Gastrocnemius medialis (tissue), 4 donors: ENCODE measurements at regions of chr9 and their contacts with region 1.

Region 1: DNA sequence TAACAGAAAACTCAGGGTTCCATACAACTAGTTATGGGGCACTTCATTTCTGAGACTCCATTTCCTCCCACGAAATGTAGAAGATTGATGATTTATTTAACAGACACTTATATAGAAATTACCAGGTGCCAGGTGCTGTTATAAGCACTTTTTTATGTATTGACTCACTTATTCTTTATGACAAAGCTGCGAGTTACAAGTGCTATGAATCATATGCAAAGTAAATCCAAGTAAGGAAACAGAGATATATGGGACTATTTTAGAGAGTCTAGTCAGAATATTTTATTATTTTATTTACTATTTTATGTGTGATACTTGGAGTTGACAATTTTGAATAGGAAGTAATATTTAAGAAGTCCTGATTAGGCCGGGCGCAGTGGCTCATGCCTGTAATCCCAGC is 822.8 kb upstream of the C9orf72 start:
- DNase-seq: no peak
- ATAC-seq: no peak
- H3K4me3 ChIP-seq: no peak overlapping the region
- H3K27ac ChIP-seq: no peak overlapping the region
- H3K4me1 ChIP-seq: no peaks in the 10 kb centered on the region
- H3K27me3 ChIP-seq: no peaks in the 10 kb centered on the region
- CTCF ChIP-seq: no peak
- POLR2A ChIP-seq: no peak

Region 2: DNA sequence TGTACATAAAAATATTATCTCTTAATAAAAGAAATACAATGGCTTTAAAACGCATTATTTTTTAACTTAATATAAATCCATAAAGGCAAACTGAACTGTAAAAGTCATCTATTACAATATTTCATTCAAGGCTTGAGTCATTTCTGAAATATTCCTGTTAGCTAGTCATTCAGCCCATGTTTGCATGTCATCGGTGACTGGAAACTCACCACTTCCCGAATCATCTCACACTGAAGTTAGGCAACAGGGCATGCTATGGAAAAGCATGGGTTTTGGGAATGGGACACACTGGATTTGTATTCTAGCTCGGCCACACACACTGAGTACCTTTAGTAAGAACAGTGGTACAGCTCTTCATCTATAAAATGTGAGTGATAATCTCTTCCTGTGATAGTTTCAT is 131.7 kb before region 1 on chr9:
- in situ Hi-C with region 1: no loop called
- intact Hi-C with region 1: no loop called
- DNase-seq: no peak
- ATAC-seq: no peak
- H3K4me3 ChIP-seq: no peak overlapping the region
- H3K27ac ChIP-seq: no peak overlapping the region
- H3K4me1 ChIP-seq: no peaks in the 10 kb centered on the region
- H3K27me3 ChIP-seq: no peaks in the 10 kb centered on the region
- CTCF ChIP-seq: no peak
- POLR2A ChIP-seq: no peak

Region 3: GRCh38 chr9:28456861-28457260 is 60.8 kb after region 1 on chr9:
- in situ Hi-C with region 1: loop called in 1 of 4 experiments (anchors 10 kb)
- intact Hi-C with region 1: no loop called
- DNase-seq: no peak
- ATAC-seq: no peak
- H3K4me3 ChIP-seq: no peak overlapping the region
- H3K27ac ChIP-seq: no peak overlapping the region
- H3K4me1 ChIP-seq: no peaks in the 10 kb centered on the region
- H3K27me3 ChIP-seq: no peaks in the 10 kb centered on the region
- CTCF ChIP-seq: no peak
- POLR2A ChIP-seq: no peak